Activated CD8-positive, alpha-beta T cell treated with anti-CD3 and anti-CD28 coated beads for 36 hours (primary cell): ENCODE measurements at regions of chr17 and their contacts with region 1.

Region 1: GRCh38 chr17:44864866-44865660 is 17.4 kb downstream of the HIGD1B start:
- DNase-seq: peak; percentile 79
- ATAC-seq: peak; percentile 80
- H3K4me3 Mint-ChIP-seq: no peak overlapping the region
- H3K27ac Mint-ChIP-seq: no peak overlapping the region
- H3K4me1 Mint-ChIP-seq: no peaks in the 10 kb centered on the region
- H3K27me3 Mint-ChIP-seq: no peaks in the 10 kb centered on the region
- CTCF ChIP-seq: peak; percentile 67

Region 2: DNA sequence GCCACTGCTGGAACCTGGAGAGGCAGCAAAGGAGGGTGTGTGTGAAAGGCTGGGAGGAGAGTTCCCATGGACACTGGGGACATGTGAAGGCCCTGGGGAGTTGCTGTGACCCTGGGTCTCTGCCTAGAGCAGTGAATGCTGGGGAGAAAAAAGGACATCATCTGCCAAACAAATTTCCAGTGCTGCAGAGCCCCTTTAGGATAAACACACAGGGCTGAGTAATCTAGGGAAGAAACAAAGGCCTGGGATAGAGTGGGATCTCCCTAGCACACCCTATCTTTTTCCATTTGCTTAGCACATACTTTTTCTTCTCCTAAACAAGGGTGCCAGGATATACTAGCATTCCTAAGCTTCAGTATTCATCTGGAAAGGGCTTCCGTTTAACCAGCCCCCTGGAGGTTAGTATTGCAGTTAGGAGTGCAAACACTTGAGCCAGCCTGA is 20.7 kb before region 1 on chr17:
- CTCF ChIA-PET with region 1: interaction called, 10 read pairs
- POLR2A ChIA-PET with region 1: interaction called, 3 read pairs
- intact Hi-C with region 1: no loop called
- DNase-seq: no peak
- ATAC-seq: no peak
- H3K4me3 Mint-ChIP-seq: no peak overlapping the region
- H3K27ac Mint-ChIP-seq: no peak overlapping the region
- H3K4me1 Mint-ChIP-seq: peaks cover 9% of the 10 kb centered on the region
- H3K27me3 Mint-ChIP-seq: no peaks in the 10 kb centered on the region
- CTCF ChIP-seq: no peak

Region 3: GRCh38 chr17:44878627-44879221 is 13.7 kb after region 1 on chr17:
- CTCF ChIA-PET with region 1: interaction called, 17 read pairs
- POLR2A ChIA-PET with region 1: interaction called, 5 read pairs
- intact Hi-C with region 1: no loop called
- DNase-seq: peak; percentile 48
- ATAC-seq: no peak
- H3K4me3 Mint-ChIP-seq: no peak overlapping the region
- H3K27ac Mint-ChIP-seq: no peak overlapping the region
- H3K4me1 Mint-ChIP-seq: no peaks in the 10 kb centered on the region
- H3K27me3 Mint-ChIP-seq: no peaks in the 10 kb centered on the region
- CTCF ChIP-seq: peak; percentile 49

Region 4: DNA sequence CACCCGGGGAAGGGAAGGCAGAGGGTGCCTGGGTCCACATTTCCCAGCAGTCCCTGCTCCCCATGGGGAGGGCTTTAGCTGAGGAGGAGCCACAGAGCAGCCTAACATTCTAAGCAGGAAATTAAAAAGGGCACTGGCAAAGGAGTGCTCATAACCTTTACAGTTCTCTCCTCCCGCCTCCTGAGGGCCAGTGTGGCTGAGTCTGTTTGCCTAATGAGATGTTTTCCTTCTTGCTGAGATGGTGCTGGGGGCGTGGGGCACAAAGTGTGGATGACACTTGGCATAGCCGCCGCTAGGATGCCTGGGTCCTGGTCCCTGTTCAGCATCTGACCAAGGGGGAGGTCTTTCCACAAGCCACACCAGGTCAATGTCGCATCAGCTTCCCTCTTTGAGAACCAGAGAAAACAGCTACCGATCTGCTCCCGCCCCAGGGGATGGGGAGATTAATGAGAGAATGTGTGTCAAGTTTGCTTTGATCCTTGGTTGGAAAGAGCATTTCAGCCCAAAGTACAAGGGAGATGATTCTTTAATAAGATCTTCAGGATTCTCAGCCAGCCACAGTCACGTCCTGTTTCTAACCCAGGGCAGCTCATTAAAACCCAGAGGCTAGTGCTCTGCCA is 76.8 kb after region 1 on chr17:
- CTCF ChIA-PET with region 1: no interaction called
- POLR2A ChIA-PET with region 1: no interaction called
- intact Hi-C with region 1: no loop called
- DNase-seq: no peak
- ATAC-seq: no peak
- H3K4me3 Mint-ChIP-seq: no peak overlapping the region
- H3K27ac Mint-ChIP-seq: no peak overlapping the region
- H3K4me1 Mint-ChIP-seq: peaks cover 8% of the 10 kb centered on the region
- H3K27me3 Mint-ChIP-seq: peaks cover 3% of the 10 kb centered on the region
- CTCF ChIP-seq: no peak